ENCODE measurements at regions of chr15 and their contacts with region 1.

Region 1: GRCh38 chr15:62495670-62496614 is 330.9 kb upstream of the C2CD4B start:
- DNase-seq: peak; percentile 47 to 89
- H3K4me3 ChIP-seq: no peak overlapping the region
- H3K27ac ChIP-seq: peak overlapping the region; percentile 78 to 84
- H3K4me1 ChIP-seq: peaks cover 0 to 19% of the 10 kb centered on the region in 2 donors
- H3K27me3 ChIP-seq: no peaks in the 10 kb centered on the region
- CTCF ChIP-seq: no peak

Region 2: GRCh38 chr15:62337934-62338333 is 158.0 kb before region 1 on chr15:
- intact Hi-C with region 1: no loop called
- DNase-seq: no peak
- H3K4me3 ChIP-seq: no peak overlapping the region
- H3K27ac ChIP-seq: no peak overlapping the region
- H3K4me1 ChIP-seq: no peaks in the 10 kb centered on the region
- H3K27me3 ChIP-seq: no peaks in the 10 kb centered on the region
- CTCF ChIP-seq: no peak

Region 3: DNA sequence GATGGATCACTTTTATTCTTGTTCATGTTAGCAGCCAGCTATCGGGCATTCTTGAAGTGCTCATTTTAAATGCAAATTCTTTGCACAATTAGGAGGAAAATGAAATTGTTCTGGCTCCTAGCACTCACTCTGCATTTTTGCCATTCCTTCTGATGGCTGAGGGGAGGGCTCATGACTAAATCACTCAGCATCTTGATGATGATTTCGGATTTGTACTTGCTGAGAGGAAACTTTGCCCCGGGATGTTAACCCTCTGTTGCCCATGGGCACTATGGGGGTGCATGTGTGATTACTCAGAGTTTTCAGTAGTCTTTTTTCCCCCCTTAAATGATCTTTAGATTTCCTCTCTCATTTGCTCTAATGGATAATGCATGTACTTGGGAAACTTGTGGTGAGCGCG is 31.2 kb before region 1 on chr15:
- intact Hi-C with region 1: no loop called
- DNase-seq: no peak
- H3K4me3 ChIP-seq: no peak overlapping the region
- H3K27ac ChIP-seq: peak overlapping the region; percentile 25 to 56
- H3K4me1 ChIP-seq: peaks cover 7 to 47% of the 10 kb centered on the region in 2 donors
- H3K27me3 ChIP-seq: no peaks in the 10 kb centered on the region
- CTCF ChIP-seq: no peak

Region 4: DNA sequence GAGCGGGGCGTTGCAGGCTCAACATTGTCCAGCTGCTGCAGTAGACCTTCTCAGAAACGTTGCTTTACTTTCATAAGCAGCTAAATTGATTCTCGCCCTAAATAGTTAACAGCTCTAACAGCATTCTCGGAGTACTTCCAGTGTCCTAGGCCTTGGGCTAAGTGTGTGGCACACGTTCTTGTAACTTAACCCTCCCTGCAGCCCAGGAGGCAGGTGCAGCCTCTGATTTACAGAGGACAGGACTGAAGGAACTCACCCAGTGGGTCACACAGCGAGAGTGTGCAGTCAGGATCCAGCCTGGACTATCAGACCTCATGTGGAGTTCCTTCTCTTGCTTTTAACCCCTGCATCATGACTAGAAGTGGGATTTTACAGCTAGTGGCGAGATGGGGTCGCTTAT is 18.0 kb before region 1 on chr15:
- intact Hi-C with region 1: loop called (anchors 2 kb)
- DNase-seq: no peak
- H3K4me3 ChIP-seq: no peak overlapping the region
- H3K27ac ChIP-seq: peak overlapping the region; percentile 25 to 98
- H3K4me1 ChIP-seq: peaks cover 15 to 52% of the 10 kb centered on the region in 2 donors
- H3K27me3 ChIP-seq: no peaks in the 10 kb centered on the region
- CTCF ChIP-seq: no peak

Region 5: GRCh38 chr15:62534996-62535395 is 39.1 kb after region 1 on chr15:
- intact Hi-C with region 1: loop called (anchors 5 kb)
- DNase-seq: no peak
- H3K4me3 ChIP-seq: no peak overlapping the region
- H3K27ac ChIP-seq: peak overlapping the region; percentile 53 to 73
- H3K4me1 ChIP-seq: peaks cover 0 to 17% of the 10 kb centered on the region in 2 donors
- H3K27me3 ChIP-seq: no peaks in the 10 kb centered on the region
- CTCF ChIP-seq: no peak

Region 6: DNA sequence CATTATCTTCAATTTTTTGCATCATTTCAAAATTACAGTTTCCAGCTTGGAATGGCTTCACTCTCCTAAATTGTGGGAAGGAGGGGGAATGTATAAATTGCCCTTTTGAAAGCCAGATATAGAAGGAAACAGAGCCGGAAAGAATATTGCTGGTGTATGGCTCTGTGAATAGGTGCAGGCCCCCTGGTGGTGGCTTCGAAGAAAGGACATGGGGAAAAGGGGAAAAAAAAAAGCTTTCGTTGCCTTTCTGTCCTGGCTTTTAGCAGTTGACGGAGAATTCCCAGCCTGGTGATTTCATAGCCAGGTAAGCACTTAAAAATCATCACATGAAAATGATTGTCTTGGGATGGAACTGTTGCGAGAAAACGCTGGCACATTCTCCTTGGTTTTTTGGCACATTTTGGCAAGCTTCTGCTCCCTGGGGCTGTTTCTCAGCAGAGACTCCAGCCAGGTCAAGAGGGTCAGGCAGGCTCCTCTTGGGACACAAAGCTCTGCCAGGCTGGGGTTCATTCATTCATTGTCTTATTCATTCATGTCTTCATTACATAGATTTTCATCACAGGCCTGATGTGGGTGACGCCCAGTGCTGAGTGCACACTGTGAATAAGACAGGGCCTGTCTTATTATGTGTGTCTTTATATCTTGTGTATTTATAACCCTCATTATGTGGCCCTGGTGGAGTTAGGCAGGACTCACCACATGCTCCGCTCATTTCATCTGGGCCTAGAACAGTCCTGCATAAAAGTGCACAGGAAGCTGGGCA is 246.6 kb after region 1 on chr15:
- intact Hi-C with region 1: no loop called
- DNase-seq: peak in 1 of 2 donors; percentile 88
- H3K4me3 ChIP-seq: no peak overlapping the region
- H3K27ac ChIP-seq: peak overlapping the region; percentile 60 to 72
- H3K4me1 ChIP-seq: peaks cover 3 to 11% of the 10 kb centered on the region in 2 donors
- H3K27me3 ChIP-seq: no peaks in the 10 kb centered on the region
- CTCF ChIP-seq: peak; percentile 50 to 84 (median 79)

Region 7: DNA sequence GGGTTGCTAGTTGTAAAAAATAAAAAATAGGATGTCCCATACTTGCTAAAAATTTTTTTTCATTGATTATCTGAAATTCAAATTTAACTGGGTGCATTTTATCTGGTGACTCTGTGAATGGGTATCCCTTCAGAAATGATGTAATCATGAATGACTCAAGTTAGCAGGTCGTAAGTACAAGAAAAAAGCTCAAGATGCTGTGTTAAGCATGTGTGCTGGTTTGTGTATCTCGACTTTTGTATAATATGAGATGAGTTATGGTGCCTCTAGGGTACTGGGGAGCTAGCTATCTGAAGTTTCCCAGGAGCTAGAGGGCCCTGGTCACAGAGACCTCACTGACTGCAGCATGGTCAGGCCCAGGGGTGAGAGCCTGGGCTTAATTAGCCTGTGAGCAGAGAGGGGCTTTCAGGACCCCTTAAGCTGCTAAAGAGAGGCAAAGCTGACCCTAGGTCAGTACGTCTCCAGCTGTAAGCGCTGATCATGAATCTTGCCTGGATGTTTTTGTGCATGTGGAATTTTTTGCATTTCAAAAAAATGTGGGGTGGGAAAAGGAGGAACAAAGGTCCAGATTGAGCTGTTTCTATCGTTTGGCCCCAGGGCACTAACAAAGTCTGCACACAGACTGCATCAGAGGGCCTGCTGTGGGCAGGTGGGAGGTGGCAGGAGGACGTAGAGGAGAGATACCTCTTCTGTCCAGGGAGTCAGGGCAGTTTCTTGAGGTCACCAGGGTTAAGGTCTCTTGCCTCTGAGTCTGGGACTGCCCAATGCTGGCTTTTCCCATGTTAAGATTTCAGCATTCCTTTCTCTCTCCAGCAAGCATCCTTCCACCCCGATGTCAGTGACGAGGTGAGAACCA is 313.4 kb after region 1 on chr15:
- intact Hi-C with region 1: no loop called
- DNase-seq: no peak
- H3K4me3 ChIP-seq: no peak overlapping the region
- H3K27ac ChIP-seq: no peak overlapping the region
- H3K4me1 ChIP-seq: no peaks in the 10 kb centered on the region
- H3K27me3 ChIP-seq: no peaks in the 10 kb centered on the region
- CTCF ChIP-seq: no peak